Panc1 (cell line): ENCODE measurements at regions of chr1 and their contacts with region 1.

Region 1: DNA sequence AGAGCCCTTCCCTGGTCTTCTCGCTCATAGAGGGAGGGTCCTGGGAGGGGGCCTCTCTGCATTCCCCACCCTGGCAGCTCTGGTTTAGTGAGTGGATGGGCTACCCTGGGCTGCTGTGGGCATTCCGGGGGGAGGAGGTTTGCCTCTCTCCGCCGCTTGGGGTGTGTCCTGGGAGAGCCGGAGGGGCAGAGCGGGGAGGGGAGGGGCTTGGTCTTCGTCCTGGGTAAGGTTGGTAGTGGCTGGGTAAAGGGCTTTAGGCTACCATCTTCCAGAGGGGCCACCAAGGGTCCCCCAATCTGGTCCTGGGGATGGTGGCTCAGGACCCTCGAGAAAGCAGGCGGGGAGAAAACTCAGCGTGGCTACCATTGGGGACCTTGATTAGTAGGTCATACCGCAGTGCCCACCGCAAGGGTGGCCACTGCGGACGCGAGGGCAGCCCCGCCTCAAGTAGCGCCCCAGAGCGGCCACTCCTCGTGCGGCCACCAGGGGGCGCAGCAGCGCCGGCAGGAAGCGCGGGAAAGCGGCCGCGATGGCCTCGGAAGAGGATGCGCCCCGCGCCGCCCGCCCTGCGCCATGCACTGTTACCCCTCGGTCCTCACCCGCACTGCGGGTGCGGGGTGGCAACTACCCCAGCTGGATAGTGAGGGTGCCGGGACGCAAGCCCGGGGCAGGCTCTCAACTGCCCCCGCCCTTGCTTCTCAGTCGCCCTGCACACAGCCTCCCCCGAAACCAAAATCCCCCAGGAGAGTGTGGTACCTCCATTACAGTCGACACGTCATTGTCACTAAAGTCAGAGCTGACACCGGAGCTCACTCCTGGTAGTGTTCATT is 44.1 kb upstream of the SLC25A33 start:
- DNase-seq: no peak
- ATAC-seq: peak; percentile 87
- H3K4me3 ChIP-seq: peak overlapping the region; percentile 27 to 48
- H3K27ac ChIP-seq: no peak overlapping the region
- H3K4me1 ChIP-seq: no peaks in the 10 kb centered on the region; the same call in 1 of the 2 replicates
- H3K27me3 ChIP-seq: no peaks in the 10 kb centered on the region
- CTCF ChIP-seq: peak; percentile 99

Region 2: GRCh38 chr1:9084906-9085305 is 410.2 kb before region 1 on chr1:
- CTCF ChIA-PET with region 1: no interaction called
- POLR2A ChIA-PET with region 1: no interaction called
- in situ Hi-C with region 1: no loop called
- intact Hi-C with region 1: no loop called
- DNase-seq: no peak
- ATAC-seq: no peak; the same call in 1 of the 2 replicates
- H3K4me3 ChIP-seq: no peak overlapping the region
- H3K27ac ChIP-seq: no peak overlapping the region
- H3K4me1 ChIP-seq: no peaks in the 10 kb centered on the region; the same call in 1 of the 2 replicates
- H3K27me3 ChIP-seq: no peaks in the 10 kb centered on the region
- CTCF ChIP-seq: no peak

Region 3: DNA sequence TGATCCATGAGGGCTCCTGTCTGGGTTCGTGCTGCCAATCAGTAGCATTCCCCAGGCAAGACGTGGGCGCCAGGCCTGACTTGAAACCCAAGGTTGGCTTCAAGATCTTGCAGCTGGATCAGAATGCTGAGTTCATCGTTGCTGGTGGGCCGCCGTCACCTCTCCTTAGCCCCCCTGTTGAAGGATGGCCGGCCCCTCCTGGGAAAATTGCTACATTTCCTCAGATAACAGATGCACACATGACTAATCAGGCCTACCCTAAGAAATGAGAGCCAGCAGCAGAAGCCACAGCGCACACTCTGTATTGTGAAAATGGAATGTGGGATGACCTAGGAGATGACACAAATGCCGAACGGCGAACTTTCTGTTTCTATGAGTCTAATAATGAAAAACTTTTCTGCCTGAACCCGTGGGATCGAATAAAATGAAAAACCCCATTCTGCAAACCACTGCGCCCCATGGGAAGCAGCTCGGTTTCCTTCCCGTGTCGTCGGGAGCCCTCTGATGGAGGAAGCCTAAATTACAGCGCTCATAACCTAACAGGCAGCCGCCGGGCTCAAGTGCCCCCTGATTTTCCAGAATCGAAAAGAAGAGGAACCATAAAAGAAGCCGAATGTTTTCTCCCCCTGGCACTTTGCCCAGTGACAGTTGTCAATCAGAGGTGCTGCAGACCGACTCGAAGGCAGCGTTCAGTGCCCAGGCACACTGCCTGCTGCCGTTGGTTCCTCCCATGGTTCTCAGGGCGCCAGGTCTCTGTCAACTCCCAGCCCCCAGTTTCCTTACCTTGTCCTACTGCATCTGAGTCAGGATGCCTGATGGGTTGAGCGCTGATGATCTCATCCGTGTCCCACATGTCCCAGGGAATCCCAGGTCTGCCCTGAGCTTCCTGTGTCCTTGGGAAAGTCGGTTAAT is 298.8 kb before region 1 on chr1:
- CTCF ChIA-PET with region 1: no interaction called
- POLR2A ChIA-PET with region 1: no interaction called
- in situ Hi-C with region 1: no loop called
- intact Hi-C with region 1: no loop called
- DNase-seq: no peak
- ATAC-seq: peak; percentile 78
- H3K4me3 ChIP-seq: peak overlapping the region in 1 of 2 experiments; percentile 15; a peak in 1 of 4 replicates
- H3K27ac ChIP-seq: no peak overlapping the region; the same call in 1 of the 2 replicates
- H3K4me1 ChIP-seq: peaks cover 16% of the 10 kb centered on the region
- H3K27me3 ChIP-seq: no peaks in the 10 kb centered on the region
- CTCF ChIP-seq: peak; percentile 93

Region 4: GRCh38 chr1:9269078-9269501 is 226.1 kb before region 1 on chr1:
- CTCF ChIA-PET with region 1: interaction called, 8 read pairs
- POLR2A ChIA-PET with region 1: no interaction called
- in situ Hi-C with region 1: no loop called
- intact Hi-C with region 1: loop called (anchors 2 kb)
- DNase-seq: no peak
- ATAC-seq: peak; percentile 20; the same call in 1 of the 2 replicates
- H3K4me3 ChIP-seq: no peak overlapping the region
- H3K27ac ChIP-seq: peak overlapping the region; percentile 59
- H3K4me1 ChIP-seq: peaks cover 43% of the 10 kb centered on the region
- H3K27me3 ChIP-seq: no peaks in the 10 kb centered on the region
- CTCF ChIP-seq: no peak

Region 5: GRCh38 chr1:9289090-9289534 is 206.0 kb before region 1 on chr1:
- CTCF ChIA-PET with region 1: interaction called, 23 read pairs
- POLR2A ChIA-PET with region 1: no interaction called
- in situ Hi-C with region 1: no loop called
- intact Hi-C with region 1: loop called (anchors 1 kb)
- DNase-seq: peak; percentile 88
- ATAC-seq: no peak
- H3K4me3 ChIP-seq: no peak overlapping the region
- H3K27ac ChIP-seq: peak overlapping the region; percentile 66
- H3K4me1 ChIP-seq: peaks cover 22% of the 10 kb centered on the region
- H3K27me3 ChIP-seq: no peaks in the 10 kb centered on the region
- CTCF ChIP-seq: peak; percentile 93

Region 6: DNA sequence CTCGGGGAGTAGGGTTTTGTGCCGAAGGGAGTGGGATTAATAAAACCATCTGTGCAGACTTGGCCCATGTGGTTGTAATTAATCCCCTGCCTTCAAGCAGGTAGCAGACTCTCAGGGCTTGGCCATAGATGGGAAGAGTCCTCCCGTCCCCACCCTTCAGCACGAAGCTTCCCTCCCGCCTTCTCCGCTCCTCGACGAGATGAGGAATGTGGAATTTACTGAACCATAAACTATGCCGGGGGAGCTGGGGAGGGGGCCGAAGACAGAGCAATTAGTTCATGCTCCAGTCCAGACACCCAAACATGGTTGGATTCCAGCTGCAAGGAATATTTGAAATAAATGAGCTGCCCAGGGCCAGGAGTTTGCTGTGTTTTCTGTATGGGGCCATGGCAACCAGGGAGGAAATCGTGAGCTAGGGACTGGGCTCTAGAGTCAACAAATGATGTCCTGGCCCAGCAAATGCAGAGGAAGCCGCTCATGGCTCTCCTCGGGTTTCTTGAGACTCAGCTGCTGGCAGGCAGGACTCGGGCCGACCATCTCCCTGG is 123.7 kb before region 1 on chr1:
- CTCF ChIA-PET with region 1: no interaction called
- POLR2A ChIA-PET with region 1: interaction called, 5 read pairs
- in situ Hi-C with region 1: no loop called
- intact Hi-C with region 1: loop called (anchors 10 kb)
- DNase-seq: no peak
- ATAC-seq: peak; percentile 24; the same call in 1 of the 2 replicates
- H3K4me3 ChIP-seq: no peak overlapping the region
- H3K27ac ChIP-seq: peak overlapping the region; percentile 8; the same call in 1 of the 2 replicates
- H3K4me1 ChIP-seq: peaks cover 46% of the 10 kb centered on the region
- H3K27me3 ChIP-seq: no peaks in the 10 kb centered on the region
- CTCF ChIP-seq: no peak

Region 7: DNA sequence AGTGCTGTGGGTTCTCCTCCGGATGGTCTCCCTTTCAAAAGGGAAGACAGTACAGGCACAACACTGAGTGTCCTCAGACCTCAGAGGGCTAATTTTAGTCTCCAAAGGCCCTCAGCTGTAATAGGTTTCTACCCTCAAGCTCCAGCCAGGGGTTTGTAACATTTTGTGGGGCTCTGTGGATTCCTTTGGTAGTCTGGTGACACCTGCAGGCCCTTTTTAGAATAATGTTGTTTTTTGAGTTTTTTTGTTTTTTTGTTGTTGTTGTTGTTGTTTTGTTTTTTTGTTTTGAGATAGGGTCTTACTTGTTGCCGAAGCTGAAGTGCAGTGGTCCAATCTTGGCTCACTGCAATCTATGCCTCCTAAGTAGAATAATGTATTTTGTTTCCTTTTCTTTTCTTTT is 78.6 kb after region 1 on chr1:
- CTCF ChIA-PET with region 1: interaction called, 10 read pairs
- POLR2A ChIA-PET with region 1: no interaction called
- in situ Hi-C with region 1: no loop called
- intact Hi-C with region 1: loop called (anchors 1 kb)
- DNase-seq: no peak
- ATAC-seq: no peak
- H3K4me3 ChIP-seq: no peak overlapping the region
- H3K27ac ChIP-seq: no peak overlapping the region
- H3K4me1 ChIP-seq: no peaks in the 10 kb centered on the region
- H3K27me3 ChIP-seq: no peaks in the 10 kb centered on the region
- CTCF ChIP-seq: peak; percentile 64